Endothelial cell of umbilical vein (primary cell): ENCODE measurements at regions of chr22 and their contacts with region 1.

Region 1: DNA sequence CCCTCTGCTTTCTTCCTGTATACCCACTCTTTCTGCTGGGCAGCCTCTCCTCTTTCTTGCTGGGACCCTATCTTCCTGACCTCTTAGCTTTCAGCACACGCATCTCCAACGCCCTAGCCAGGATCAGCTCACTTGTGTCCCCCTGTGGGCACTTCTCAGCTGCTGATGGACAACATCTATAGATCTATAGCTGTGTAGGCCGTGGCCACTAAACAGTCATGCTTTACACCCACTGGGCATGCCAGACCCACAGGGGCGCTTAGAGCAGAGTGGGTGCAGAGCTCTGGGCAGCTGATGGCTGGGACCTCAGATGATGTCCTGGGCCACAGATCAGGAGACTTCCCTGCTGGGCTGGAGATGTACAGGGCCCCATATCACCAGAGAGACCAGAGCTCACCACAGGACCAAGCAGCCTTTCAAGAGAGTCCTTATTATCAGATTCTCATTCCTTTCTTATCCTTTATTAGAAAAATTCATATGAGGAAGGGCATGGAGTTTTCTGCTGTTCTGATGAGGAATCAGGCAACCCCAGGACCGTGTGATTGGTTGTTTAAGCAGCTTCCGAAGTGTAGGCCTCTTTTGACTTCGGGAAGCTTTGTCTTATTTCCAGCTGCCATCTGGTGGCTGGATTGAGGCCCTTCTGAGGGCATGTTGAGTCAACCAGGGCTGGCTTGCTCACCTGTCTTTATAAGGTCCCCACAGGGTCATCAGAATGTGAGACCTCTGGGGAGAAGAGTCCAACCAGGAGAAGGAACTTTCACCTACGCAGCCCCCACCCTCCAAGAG is 60.5 kb downstream of the OSBP2 start:
- DNase-seq: peak; percentile 72
- H3K4me3 ChIP-seq: no peak overlapping the region
- H3K27ac ChIP-seq: no peak overlapping the region
- H3K4me1 ChIP-seq: no peaks in the 10 kb centered on the region
- H3K27me3 ChIP-seq: no peaks in the 10 kb centered on the region
- CTCF ChIP-seq: peak; percentile 81 to 82
- POLR2A ChIP-seq: no peak

Region 2: DNA sequence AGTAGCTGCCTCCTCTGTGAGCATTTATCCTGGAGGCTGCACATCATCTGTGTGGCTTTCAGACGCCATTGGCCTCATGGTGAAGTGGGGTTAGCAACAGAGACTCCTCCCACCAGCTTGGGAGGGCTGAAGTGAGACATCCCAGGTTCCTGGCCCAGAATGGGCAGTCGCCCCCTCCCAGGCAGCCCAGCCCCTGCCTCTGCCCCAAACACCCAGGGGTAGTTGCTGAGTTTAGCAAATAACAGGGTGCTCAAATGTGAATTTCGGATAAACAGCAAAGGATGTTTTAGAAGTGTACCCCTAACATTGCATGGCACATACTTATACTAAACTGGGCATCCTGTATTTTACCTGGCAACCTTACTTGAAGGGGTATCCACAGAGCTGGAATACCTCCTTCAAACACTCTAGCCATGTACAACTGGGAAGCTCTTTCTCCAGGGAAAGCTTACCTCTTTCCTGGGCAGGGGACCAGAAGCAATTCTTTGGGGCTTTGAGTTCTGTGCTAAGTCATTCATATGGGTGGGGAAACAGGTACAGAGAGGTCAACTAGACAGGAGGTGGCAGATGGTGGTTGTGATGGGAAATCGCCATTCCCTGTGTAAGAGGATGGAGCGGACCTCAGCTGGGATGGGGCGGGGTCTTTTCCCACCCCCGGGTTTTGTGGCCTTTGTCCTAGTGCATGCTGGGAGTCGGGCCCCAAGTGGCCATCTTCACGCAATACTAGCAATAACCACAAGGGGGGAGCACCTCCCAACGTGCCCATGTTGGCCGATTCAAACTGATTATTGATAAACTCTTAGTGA is 310.3 kb before region 1 on chr22:
- CTCF ChIA-PET with region 1: interaction called, 29 read pairs
- POLR2A ChIA-PET with region 1: no interaction called
- dilution Hi-C with region 1: no loop called
- intact Hi-C with region 1: loop called (anchors 1 kb)
- DNase-seq: peak; percentile 76
- H3K4me3 ChIP-seq: no peak overlapping the region
- H3K27ac ChIP-seq: no peak overlapping the region
- H3K4me1 ChIP-seq: no peaks in the 10 kb centered on the region
- H3K27me3 ChIP-seq: no peaks in the 10 kb centered on the region
- CTCF ChIP-seq: peak; percentile 77 to 83
- POLR2A ChIP-seq: peak; percentile 21

Region 3: GRCh38 chr22:30606455-30607299 is 148.5 kb before region 1 on chr22 and contains the start of gene TCN2:
- CTCF ChIA-PET with region 1: interaction called, 59 read pairs
- POLR2A ChIA-PET with region 1: interaction called, 8 read pairs
- dilution Hi-C with region 1: no loop called
- intact Hi-C with region 1: loop called (anchors 1 kb)
- DNase-seq: peak; percentile 83
- H3K4me3 ChIP-seq: peak within 1 kb of the TSS; percentile 11 to 55 (median 35)
- H3K27ac ChIP-seq: peak within 1 kb of the TSS; percentile 73
- H3K4me1 ChIP-seq: peaks cover 37% of the 10 kb centered on the region
- H3K27me3 ChIP-seq: no peaks in the 10 kb centered on the region
- CTCF ChIP-seq: no peak
- POLR2A ChIP-seq: peak; percentile 84
- total RNA-seq, gene TCN2: 62.3 and 80.6 TPM in 2 replicates

Region 4: DNA sequence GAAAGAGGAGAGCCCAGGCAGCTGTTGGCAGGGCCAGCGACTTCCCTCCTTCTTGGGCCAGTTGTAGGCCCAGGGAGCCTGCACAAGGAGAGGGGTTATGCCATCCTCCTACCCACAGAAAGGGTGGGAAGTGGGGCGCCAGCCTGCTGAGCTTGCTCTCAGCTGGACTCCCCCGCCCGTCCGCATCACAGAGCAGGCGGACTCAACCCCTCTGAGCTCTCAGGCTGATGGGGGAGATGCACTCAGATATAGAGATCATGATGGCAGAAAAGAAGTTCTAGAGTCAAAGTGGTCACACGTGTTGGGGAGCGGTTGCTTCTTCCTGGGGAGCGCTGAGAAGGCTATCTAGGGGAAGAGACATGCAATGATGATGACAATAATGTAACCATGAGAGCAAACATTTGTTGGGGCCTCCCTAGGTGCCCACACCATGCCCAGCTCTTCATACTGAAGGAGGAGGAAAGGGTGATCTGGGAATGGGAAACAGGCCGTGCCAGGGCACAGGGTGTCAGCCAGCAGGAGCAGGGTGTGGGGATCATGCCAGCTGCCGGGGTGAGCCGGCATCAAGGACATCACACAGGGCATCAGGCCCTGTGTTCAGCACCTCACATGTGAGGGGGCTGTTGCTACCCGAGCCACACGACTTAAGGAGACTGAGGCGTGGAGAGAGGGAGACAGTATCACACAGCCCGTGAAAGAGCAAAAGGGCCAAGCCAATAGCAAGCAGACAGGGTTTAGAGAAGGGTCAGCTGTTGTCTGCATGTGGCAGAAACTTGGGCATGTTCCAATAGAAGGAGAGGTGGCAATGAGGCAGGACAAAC is 111.9 kb before region 1 on chr22:
- CTCF ChIA-PET with region 1: interaction called, 32 read pairs
- POLR2A ChIA-PET with region 1: no interaction called
- dilution Hi-C with region 1: no loop called
- intact Hi-C with region 1: no loop called
- DNase-seq: no peak
- H3K4me3 ChIP-seq: no peak overlapping the region
- H3K27ac ChIP-seq: no peak overlapping the region
- H3K4me1 ChIP-seq: no peaks in the 10 kb centered on the region
- H3K27me3 ChIP-seq: no peaks in the 10 kb centered on the region
- CTCF ChIP-seq: no peak
- POLR2A ChIP-seq: no peak

Region 5: DNA sequence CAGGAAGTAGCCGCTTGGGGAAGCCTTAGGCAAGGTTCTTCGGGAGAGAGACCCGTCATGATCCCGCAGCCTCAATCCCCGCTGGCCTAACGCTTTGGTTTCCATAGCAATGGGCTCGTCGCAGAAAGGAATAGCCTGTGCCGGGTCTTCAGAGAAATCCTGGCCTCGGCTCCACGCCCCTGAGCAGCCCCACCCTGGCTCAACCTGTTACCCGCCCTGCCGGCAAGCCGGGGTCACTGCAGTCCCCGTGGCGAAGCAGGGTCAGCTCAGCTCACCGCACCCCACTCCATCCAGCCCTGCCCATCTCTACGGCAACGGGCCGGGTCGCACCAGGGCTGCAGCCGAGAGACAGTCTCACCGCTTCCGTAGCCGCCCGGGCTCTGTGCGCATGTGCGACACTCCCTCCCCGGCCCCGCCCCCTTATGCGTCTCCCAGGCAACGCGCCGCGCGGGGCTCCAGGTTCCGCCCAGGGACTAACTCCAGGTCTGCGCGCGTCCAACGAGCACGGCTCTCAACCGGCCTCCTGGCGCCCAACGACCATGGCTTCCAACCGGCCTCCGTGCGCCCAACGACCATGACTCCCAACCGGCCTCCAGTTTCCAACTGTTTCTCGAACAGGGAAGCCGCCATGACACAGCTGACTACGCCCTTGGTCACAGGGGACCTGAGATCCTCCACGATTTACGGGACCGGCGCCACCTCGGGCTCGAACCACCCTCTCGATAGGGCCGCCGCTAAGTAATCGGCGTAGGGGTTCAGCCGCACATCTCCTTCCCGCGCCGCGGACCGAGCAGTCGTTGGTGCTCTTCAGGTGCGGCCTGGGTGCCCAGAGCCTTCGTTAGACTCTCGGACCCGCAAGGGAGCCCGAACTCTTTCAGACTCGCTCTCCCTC is 87.4 kb before region 1 on chr22 and contains the start of gene DUSP18:
- CTCF ChIA-PET with region 1: interaction called, 47 read pairs
- POLR2A ChIA-PET with region 1: no interaction called
- dilution Hi-C with region 1: no loop called
- intact Hi-C with region 1: no loop called
- DNase-seq: peak; percentile 94
- H3K4me3 ChIP-seq: peak within 1 kb of the TSS; percentile 35 to 71 (median 66)
- H3K27ac ChIP-seq: peak within 1 kb of the TSS; percentile 25
- H3K4me1 ChIP-seq: peaks cover 18% of the 10 kb centered on the region
- H3K27me3 ChIP-seq: no peaks in the 10 kb centered on the region
- CTCF ChIP-seq: peak; percentile 19 to 41
- POLR2A ChIP-seq: peak; percentile 77
- total RNA-seq, gene DUSP18: 17.5 and 18.3 TPM in 2 replicates

Region 6: GRCh38 chr22:30705710-30706651 is 49.2 kb before region 1 on chr22:
- CTCF ChIA-PET with region 1: interaction called, 12 read pairs
- POLR2A ChIA-PET with region 1: no interaction called
- dilution Hi-C with region 1: no loop called
- intact Hi-C with region 1: no loop called
- DNase-seq: no peak
- H3K4me3 ChIP-seq: no peak overlapping the region
- H3K27ac ChIP-seq: no peak overlapping the region
- H3K4me1 ChIP-seq: peaks cover 4% of the 10 kb centered on the region
- H3K27me3 ChIP-seq: no peaks in the 10 kb centered on the region
- CTCF ChIP-seq: no peak
- POLR2A ChIP-seq: no peak

Region 7: DNA sequence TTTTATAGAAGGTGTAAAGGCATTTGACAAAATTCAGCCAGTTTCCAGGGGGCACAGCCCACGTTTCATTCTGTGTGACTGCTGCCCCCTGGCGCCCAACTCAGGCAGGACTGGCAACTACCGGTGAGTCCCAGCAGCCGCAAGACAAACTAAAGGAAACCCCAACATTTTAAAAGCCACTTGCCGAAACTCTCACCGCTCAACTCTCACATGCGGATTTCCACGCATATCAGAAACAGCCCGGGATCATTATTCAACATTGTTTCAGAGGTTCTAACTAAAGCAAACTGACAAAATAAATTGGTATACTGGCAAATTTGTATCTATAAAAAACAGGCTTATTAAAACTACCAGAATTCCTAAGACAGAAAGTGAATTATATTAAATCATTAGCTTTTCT is 165.2 kb after region 1 on chr22:
- CTCF ChIA-PET with region 1: interaction called, 17 read pairs
- POLR2A ChIA-PET with region 1: no interaction called
- dilution Hi-C with region 1: no loop called
- intact Hi-C with region 1: no loop called
- DNase-seq: peak; percentile 62
- H3K4me3 ChIP-seq: no peak overlapping the region
- H3K27ac ChIP-seq: no peak overlapping the region
- H3K4me1 ChIP-seq: peaks cover 13% of the 10 kb centered on the region
- H3K27me3 ChIP-seq: no peaks in the 10 kb centered on the region
- CTCF ChIP-seq: peak; percentile 87 to 88
- POLR2A ChIP-seq: no peak